Activated CD8-positive, alpha-beta T cell treated with anti-CD3 and anti-CD28 coated beads, Interleukin-2, amount 10 ng/mL, durations not matched to agents 7 days and 5 days (primary cell): ENCODE measurements at regions of chr2 and their contacts with region 1.

Region 1: DNA sequence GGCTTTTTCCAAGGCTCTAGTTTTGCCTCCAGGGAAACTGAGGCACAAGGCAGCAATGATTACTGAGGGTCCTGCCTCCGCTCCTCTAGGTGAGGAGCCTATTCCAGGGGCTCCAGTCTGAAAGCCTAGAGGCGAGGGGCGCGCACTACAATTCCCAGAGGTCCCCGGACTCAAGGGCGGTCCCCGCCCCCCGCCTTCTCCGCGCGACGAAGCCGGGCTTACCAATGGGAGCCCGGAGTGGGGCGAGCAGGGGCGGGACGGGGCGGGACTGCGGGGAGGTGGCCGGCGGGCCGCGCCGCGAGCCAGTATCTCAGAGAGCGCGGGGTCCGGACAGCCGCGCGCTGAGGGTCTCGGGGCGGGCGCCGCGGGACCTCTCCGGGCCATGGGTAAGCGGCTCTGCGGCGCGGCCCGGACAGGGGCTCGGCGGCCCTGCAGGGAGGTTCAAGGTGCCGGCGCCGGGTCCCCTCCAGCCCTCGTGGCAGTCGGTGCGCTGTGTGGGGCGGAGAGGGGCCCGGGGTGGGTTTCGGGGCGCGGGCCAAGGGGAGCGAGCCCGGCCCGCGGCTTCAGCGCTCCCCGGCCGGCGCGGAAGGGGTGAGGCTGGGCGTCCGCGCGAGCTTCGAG is at the start of gene ARID5A:
- DNase-seq: peak; percentile 95
- ATAC-seq: peak; percentile 65
- H3K4me3 Mint-ChIP-seq: peak within 1 kb of the TSS; percentile 83
- H3K27ac Mint-ChIP-seq: peak within 1 kb of the TSS; percentile 82
- H3K4me1 Mint-ChIP-seq: peaks cover 63% of the 10 kb centered on the region
- H3K27me3 Mint-ChIP-seq: no peaks in the 10 kb centered on the region
- total RNA-seq, gene ARID5A: 37.7 to 40.1 TPM

Region 2: DNA sequence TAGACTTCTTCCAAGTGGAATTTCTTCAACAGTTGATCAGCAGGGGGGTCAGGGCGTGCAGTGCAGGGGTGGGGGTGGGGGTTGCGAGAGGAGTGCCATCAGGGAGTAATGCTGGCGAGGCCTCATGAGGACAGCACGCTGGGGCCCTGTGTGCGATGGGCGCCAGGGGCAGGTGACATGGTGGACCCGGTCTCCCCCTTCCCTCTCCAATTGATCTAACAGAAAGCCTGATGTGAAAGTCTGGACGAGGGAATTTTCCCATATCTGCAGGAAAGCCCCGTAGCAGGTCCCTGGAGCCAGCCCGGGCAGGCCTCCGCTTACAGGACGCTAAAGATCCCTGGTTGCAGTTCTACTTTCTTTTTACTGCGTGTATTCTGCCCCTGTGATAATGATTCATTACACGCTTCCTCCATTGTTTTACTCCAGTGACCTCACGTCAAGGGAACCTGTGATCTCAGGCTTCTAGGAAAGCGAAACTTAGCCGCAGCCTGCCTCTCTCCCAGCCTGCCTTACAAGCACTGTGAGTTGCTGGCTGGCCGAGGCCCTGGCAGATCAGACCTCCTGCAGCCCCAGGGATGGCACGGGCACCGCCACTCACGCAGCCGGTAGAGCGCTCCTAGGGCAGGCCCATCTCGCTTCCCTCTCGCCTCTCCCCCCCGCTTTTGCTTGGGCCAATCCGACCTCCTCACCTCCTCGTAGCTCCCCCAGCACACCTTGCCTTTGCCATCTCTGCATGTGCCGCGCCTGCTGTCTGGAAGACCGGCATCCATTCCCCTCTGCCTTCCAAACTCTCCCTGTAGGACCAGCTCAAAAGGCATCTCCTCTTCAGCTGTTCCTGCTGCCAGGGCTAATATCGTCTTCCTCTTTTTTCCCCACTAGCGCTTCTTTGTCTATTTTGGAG is 50.6 kb before region 1 on chr2:
- CTCF ChIA-PET with region 1: no interaction called
- POLR2A ChIA-PET with region 1: interaction called, 14 read pairs
- DNase-seq: peak; percentile 93
- ATAC-seq: peak; percentile 98
- H3K4me3 Mint-ChIP-seq: peak overlapping the region; percentile 87
- H3K27ac Mint-ChIP-seq: peak overlapping the region; percentile 98
- H3K4me1 Mint-ChIP-seq: peaks cover 44% of the 10 kb centered on the region
- H3K27me3 Mint-ChIP-seq: no peaks in the 10 kb centered on the region

Region 3: DNA sequence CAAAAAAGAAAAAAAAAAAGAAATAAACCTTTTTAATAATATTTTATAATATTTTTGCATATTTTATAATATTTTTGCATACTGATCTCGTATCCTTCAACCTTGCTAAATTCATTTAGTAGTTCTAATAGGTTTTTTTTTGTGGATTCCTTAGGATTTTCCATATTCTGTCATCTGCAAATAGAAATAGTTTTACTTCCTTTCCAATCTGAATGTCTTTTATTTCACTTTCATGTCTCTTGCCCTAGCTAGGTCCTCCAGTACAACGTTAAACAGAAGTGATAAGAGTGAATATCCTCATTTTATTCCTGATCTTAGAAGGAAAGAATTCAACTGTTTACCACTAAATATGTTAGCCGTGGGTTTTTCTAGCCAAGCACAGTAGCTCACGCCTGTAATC is 189.6 kb after region 1 on chr2:
- CTCF ChIA-PET with region 1: no interaction called
- POLR2A ChIA-PET with region 1: no interaction called
- DNase-seq: no peak
- ATAC-seq: no peak
- H3K4me3 Mint-ChIP-seq: no peak overlapping the region
- H3K27ac Mint-ChIP-seq: no peak overlapping the region
- H3K4me1 Mint-ChIP-seq: no peaks in the 10 kb centered on the region
- H3K27me3 Mint-ChIP-seq: no peaks in the 10 kb centered on the region